ENCODE measurements at regions of chr13 and their contacts with region 1.

Region 1: GRCh38 chr13:48769107-48769704 is 115.5 kb downstream of the CYSLTR2 start:
- DNase-seq: peak; percentile 34 to 80
- ATAC-seq: peak; percentile 76 to 94
- H3K4me3 ChIP-seq: no peak overlapping the region
- H3K27ac ChIP-seq: no peak overlapping the region; a peak in 1 of 6 replicates
- H3K4me1 ChIP-seq: no peaks in the 10 kb centered on the region
- CTCF ChIP-seq: peak; percentile 97
- EP300 ChIP-seq: no peak
- POLR2A ChIP-seq: no peak
- RAD21 ChIP-seq: peak; percentile 98 to 99

Region 2: DNA sequence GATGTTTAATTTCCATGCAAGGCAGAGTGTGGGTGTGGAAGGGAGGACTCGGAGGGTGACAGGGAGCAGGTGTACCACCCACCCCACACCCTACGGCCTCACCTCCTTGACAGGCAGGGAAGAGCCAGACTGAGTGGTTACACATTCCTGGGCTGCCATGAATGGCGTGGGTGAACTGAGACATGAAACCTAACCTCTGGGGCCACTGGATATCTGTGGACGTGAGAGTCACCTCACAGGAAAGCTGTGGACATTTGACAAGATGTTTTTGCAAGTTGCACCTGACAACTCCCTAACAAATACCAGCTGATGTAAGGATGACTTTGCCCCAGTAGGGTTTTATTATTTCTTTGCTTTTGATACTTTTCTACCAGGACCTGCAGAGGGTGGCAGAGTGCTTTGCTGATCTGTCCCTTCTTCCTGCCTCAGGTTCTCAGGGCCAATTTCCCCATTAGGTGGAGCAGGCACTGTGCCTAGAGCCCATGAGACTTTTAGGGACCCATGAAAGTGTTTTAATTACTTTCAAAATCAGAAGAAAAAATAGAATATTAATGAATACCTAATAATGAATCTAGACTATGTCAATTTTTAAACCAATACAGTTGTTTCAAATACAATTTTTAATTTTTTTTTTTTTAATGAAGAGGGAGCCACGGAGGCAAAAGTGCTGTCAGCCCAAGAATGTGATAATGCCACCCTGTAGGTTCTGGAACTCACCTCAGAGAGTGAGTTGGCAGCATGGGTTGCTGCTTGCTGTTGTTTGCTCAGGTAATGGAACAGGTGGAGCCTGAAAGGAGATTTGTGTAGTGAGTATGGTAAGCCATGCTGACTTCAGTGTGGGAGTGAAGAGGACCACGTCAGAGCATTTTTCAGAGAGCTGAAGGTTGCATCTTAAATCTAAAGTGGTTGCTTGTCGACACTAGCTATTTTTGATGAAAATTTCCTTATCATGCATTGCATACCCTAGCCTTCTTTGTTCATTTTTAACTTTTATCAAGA is 173.5 kb before region 1 on chr13:
- CTCF ChIA-PET with region 1: interaction called, 141 read pairs
- POLR2A ChIA-PET with region 1: interaction called, 3 read pairs
- DNase-seq: peak; percentile 15 to 63
- ATAC-seq: peak; percentile 89 to 92
- H3K4me3 ChIP-seq: no peak overlapping the region
- H3K27ac ChIP-seq: no peak overlapping the region
- H3K4me1 ChIP-seq: no peaks in the 10 kb centered on the region
- CTCF ChIP-seq: peak; percentile 70
- EP300 ChIP-seq: no peak
- POLR2A ChIP-seq: no peak
- RAD21 ChIP-seq: peak; percentile 81

Region 3: DNA sequence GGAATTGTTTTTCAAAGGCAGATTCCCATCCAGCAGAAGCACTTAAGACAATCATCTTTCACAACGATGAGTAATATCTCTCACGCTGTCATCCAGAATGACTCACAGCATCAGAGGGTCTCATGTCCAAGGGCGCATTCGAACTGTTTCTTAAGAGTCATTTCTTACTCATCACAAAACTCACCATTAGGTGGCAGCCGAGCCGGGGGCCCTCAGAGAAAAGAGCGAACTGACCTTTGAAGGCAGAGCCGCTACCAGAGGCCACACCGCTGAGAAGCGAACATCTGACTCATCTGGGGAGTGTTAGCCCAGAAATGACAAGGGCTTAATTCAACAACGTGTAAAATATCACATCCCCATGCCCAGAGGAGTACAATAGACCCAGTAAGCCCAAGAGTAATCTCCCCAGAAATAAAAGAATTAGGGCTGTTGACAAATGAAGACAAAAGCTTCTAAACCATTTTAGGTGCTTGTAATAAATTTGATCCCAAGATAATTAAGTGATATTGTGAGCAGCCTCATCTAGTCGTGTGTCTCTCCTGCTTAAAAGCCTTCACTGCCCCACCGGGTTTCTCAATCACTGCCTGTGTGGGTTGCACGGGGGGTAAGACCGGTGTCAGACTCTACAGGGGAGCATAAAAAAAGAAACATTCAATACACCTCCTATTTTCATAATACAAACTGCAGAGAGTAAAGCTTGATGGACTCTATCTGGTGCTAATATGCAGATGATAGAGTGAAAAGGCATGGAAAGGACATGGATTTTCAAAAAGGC is 19.3 kb before region 1 on chr13:
- CTCF ChIA-PET with region 1: interaction called, 20 read pairs
- POLR2A ChIA-PET with region 1: no interaction called
- DNase-seq: peak; percentile 62 to 90
- ATAC-seq: peak; percentile 99
- H3K4me3 ChIP-seq: no peak overlapping the region
- H3K27ac ChIP-seq: peak overlapping the region; percentile 47 to 76
- H3K4me1 ChIP-seq: peaks cover 19% of the 10 kb centered on the region
- CTCF ChIP-seq: peak; percentile 61
- EP300 ChIP-seq: no peak
- POLR2A ChIP-seq: no peak
- RAD21 ChIP-seq: peak; percentile 52 to 59

Measured in A549 (cell line).